ENCODE measurements at regions of chr1 and their contacts with region 1.

Region 1: DNA sequence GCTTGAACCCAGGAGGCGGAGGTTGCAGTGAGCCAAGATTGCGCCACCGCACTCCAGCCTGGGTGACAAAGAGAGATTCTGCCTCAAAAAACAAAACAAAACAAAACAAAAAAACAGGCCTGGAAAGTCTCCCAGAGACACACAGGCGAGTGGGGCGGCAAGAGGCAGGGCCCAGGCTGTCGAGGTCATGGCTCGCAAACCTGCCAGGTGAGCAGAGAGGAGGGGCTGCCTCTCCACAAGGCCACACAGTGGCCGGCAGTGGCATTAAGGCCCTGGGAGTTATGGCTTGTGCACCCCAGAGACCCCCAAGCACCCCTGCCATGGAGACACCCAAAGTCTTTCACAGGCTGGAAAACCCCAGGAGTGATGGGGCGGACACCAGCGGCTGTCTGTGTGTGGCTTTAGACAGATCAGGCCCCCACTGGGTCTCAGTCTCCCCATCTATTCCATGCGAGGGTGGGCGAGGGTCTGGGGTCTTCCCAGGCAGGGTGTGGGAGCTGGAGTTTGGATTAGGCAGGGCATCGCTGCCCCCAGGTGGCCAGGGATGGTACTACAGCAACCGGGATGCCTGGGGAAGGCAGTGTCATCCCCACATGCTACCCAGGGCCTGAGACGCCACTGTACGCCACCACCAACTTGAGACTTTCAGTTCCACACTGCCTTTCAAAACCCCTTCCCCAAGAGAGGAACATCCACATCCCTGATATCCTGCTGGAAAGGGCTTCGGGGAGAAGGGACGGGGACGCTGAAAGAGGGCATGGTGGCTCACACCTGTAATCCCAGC is 7.3 kb upstream of the CTRC start:
- DNase-seq: peak; percentile 76 to 94 (median 87)
- ATAC-seq: peak; percentile 57 to 76 (median 70)
- H3K4me3 ChIP-seq: no peak overlapping the region
- H3K27ac ChIP-seq: peak overlapping the region; percentile 61 to 85 (median 81)
- H3K4me1 ChIP-seq: peaks cover 13 to 36% (median 24%) of the 10 kb centered on the region in 3 donors
- H3K27me3 ChIP-seq: no peaks in the 10 kb centered on the region
- CTCF ChIP-seq: peak; percentile 91 to 94 (median 92)

Region 2: GRCh38 chr1:15141935-15142539 is 288.9 kb before region 1 on chr1:
- intact Hi-C with region 1: loop called in 1 of 3 experiments (anchors 10 kb)
- DNase-seq: peak; percentile 83 to 99 (median 97)
- ATAC-seq: peak; percentile 76 to 92 (median 84)
- H3K4me3 ChIP-seq: no peak overlapping the region
- H3K27ac ChIP-seq: peak overlapping the region; percentile 37 to 83 (median 70)
- H3K4me1 ChIP-seq: peaks cover 52 to 83% (median 52%) of the 10 kb centered on the region in 3 donors
- H3K27me3 ChIP-seq: no peaks in the 10 kb centered on the region
- CTCF ChIP-seq: peak in 2 of 4 donors; percentile 7 to 10

Region 3: GRCh38 chr1:15328351-15329103 is 102.5 kb before region 1 on chr1:
- intact Hi-C with region 1: loop called in 2 of 3 experiments (anchors 5 kb)
- DNase-seq: peak in 3 of 6 donors; percentile 60 to 83 (median 73)
- ATAC-seq: peak; percentile 67 to 83 (median 82)
- H3K4me3 ChIP-seq: no peak overlapping the region
- H3K27ac ChIP-seq: peak overlapping the region; percentile 49 to 67 (median 58)
- H3K4me1 ChIP-seq: peaks cover 10 to 16% (median 15%) of the 10 kb centered on the region in 3 donors
- H3K27me3 ChIP-seq: no peaks in the 10 kb centered on the region
- CTCF ChIP-seq: no peak

Region 4: DNA sequence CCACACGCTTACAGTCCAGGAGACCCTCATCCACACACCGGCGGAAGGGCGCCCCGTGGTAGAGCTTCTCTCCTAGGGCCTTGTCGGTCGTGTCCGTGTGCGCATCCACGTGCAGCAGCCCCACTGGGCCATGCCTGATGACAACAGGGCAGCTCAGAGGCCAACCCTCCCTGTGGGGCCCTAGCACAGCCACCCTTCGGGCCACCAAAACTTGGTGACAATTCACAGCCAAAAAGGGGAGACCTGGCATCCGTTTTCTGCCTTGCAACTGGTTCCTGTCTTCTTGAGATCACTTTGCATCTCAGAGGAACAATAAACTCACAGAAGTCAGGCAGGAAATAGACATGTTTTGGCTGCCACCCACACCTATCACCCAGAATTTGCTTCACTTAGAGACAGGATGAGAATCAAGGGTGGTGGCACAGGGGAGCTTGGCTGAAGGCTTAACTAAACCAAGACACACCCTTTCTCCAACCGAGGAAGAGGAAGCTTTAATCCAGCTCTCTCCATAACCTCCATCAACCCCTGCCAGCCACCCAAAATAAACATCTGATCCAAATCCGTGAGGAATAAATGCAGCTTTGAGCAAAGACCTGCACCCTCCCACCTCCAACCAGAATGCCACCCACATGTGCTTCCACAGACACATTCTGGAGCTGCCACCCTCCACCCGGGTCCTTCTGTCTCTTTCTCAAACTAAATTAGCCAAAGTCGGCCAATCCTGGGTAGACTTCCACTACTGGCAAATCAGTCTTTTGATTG is 148.1 kb after region 1 on chr1:
- intact Hi-C with region 1: no loop called
- DNase-seq: peak in 1 of 6 donors; percentile 57
- ATAC-seq: no peak
- H3K4me3 ChIP-seq: no peak overlapping the region
- H3K27ac ChIP-seq: no peak overlapping the region
- H3K4me1 ChIP-seq: no peaks in the 10 kb centered on the region
- H3K27me3 ChIP-seq: no peaks in the 10 kb centered on the region
- CTCF ChIP-seq: no peak